ENCODE measurements at regions of chr19 and their contacts with region 1.

Region 1: GRCh38 chr19:55301459-55302317 is 17.9 kb downstream of the BRSK1 start:
- DNase-seq: no peak
- H3K4me3 ChIP-seq: no peak overlapping the region; the same call in 1 of the 2 replicates
- H3K27me3 ChIP-seq: no peaks in the 10 kb centered on the region
- CTCF ChIP-seq: peak; percentile 95

Region 2: GRCh38 chr19:55189424-55189823 is 112.3 kb before region 1 on chr19:
- CTCF ChIA-PET with region 1: no interaction called
- POLR2A ChIA-PET with region 1: no interaction called
- DNase-seq: peak; percentile 83
- H3K4me3 ChIP-seq: no peak overlapping the region
- H3K27me3 ChIP-seq: no peaks in the 10 kb centered on the region; the same call in 1 of the 2 replicates
- CTCF ChIP-seq: no peak

Region 3: DNA sequence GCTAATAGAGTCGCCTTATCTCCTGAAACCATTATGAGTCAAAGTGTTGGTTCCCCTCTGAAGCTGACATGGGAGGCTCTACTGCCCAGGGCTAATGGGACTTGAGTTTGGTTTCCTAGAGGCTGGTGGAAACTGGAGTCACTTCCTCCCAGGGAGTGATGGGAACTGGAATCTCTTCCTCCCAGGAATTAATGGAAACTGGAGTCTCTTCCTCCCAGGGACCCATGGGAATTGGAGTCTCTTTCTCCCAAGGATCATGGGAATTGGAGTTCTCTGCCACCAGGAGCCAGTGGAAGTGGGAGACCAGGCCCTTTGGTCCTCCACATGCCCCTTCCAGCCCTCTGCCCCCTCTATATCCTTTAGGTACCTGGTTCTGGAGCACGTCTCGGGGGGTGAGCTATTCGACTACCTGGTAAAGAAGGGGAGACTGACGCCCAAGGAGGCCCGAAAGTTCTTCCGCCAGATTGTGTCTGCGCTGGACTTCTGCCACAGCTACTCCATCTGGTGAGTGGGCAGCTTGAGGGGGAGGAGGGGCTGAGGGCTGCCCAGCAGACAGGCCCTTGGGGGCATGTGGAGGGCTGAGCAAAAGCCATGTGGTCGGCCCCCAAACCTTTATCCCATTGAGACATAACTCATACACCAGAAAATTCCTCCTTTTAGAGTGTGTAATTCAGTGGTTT is 12.4 kb before region 1 on chr19:
- CTCF ChIA-PET with region 1: interaction called, 53 read pairs
- POLR2A ChIA-PET with region 1: no interaction called
- DNase-seq: no peak
- H3K4me3 ChIP-seq: no peak overlapping the region
- H3K27me3 ChIP-seq: no peaks in the 10 kb centered on the region
- CTCF ChIP-seq: no peak

Region 4: GRCh38 chr19:55319785-55320184 is 18.1 kb after region 1 on chr19:
- CTCF ChIA-PET with region 1: interaction called, 30 read pairs
- POLR2A ChIA-PET with region 1: no interaction called
- DNase-seq: no peak
- H3K4me3 ChIP-seq: no peak overlapping the region
- H3K27me3 ChIP-seq: no peaks in the 10 kb centered on the region
- CTCF ChIP-seq: no peak

Region 5: GRCh38 chr19:55345818-55346724 is 44.4 kb after region 1 on chr19:
- CTCF ChIA-PET with region 1: no interaction called
- POLR2A ChIA-PET with region 1: no interaction called
- DNase-seq: no peak
- H3K4me3 ChIP-seq: no peak overlapping the region
- H3K27me3 ChIP-seq: no peaks in the 10 kb centered on the region
- CTCF ChIP-seq: no peak

Region 6: DNA sequence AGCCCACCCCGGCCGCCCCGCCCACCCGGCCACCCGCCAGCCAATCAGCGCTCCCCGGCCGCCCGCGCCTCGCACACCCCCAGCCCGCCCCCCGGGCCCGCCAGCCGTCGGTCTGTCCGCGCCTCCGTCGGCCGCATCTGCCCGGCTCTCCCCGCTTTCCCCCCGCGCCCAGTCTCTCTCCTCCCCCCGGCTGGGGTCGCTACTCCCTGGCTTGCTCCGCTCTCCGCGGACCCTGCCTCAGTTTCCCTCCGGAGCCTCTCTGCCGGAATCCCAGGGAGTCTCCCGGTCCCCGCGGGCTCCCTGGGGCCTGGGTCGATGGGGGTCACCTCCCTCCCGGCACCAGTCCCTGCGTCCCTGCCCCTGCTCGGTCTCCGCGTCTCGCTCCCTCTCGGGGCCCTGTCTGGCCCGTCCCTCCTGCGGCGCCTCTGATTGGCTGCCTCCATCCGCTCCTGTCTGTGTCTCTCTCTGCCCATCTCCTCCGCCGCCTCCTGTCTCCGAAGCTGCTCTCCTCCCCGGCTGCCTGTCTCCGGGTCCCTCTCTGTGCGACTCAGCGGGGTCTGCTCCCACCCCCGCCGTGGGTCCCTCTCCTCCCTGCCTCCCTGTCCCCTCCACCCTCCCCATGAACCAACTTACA is 68.1 kb after region 1 on chr19:
- CTCF ChIA-PET with region 1: interaction called, 15 read pairs
- POLR2A ChIA-PET with region 1: no interaction called
- DNase-seq: no peak
- H3K4me3 ChIP-seq: peak overlapping the region; percentile 73
- H3K27me3 ChIP-seq: no peaks in the 10 kb centered on the region
- CTCF ChIP-seq: no peak

Region 7: GRCh38 chr19:55391702-55392615 is 90.3 kb after region 1 on chr19:
- CTCF ChIA-PET with region 1: interaction called, 12 read pairs
- POLR2A ChIA-PET with region 1: no interaction called
- DNase-seq: no peak
- H3K4me3 ChIP-seq: no peak overlapping the region
- H3K27me3 ChIP-seq: no peaks in the 10 kb centered on the region
- CTCF ChIP-seq: no peak